Activated T-helper 1 cell treated with anti-CD3 and anti-CD28 coated beads, Interleukin-12 subunit alpha, Interleukin-12 subunit beta, Interleukin-2, Interleukin-4 antibody, amounts not matched to agents 30 ng/mL and 10 ng/mL and 1 ng/mL, durations not matched to agents 14 hours and 24 hours and 36 hours (primary cell): ENCODE measurements at regions of chr1 and their contacts with region 1.

Region 1: DNA sequence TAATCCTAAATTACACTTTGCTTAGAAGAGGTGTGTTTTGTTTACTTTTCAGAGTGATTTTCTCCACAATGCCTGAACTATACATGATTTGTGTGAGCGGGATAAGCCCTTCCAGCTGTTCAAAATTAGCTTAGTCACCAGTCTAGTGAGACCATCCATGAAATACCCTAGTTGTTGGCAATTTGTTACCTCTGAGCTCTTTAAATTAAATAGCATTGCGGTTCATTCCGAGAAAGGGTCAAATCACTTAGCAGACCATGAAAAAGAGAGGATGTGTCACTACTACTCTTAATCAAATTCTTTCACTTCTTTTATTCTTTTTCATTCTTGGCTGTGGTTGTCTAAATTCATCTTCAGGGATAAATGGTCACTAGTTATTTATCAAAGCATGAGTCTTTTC is 11.9 kb upstream of the VAV3 start:
- DNase-seq: no peak
- H3K4me3 Mint-ChIP-seq: no peak overlapping the region
- H3K27ac Mint-ChIP-seq: no peak overlapping the region
- H3K4me1 Mint-ChIP-seq: no peaks in the 10 kb centered on the region
- H3K27me3 Mint-ChIP-seq: peaks cover 9% of the 10 kb centered on the region

Region 2: DNA sequence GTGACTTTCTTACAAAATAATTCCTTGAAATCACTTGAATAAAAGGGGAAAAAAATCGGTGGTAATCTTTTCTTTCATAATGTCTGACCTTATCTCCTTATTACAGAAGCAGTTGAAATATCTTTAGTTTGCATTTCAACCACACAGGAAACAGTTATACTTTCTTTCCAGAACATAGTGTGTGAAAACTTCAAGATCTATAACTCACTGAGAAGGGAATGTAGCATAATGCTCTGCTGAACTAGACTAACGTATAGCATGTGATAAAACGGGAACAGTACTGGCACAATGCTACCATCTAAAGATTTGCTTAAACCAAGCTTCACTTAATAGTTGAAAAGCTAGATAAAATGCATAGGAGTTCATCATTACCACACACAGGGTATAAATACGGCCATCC is 56.9 kb before region 1 on chr1:
- intact Hi-C with region 1: no loop called
- DNase-seq: no peak
- H3K4me3 Mint-ChIP-seq: no peak overlapping the region
- H3K27ac Mint-ChIP-seq: no peak overlapping the region
- H3K4me1 Mint-ChIP-seq: peaks cover 16% of the 10 kb centered on the region
- H3K27me3 Mint-ChIP-seq: no peaks in the 10 kb centered on the region

Region 3: GRCh38 chr1:108053270-108054013 is 76.6 kb after region 1 on chr1:
- intact Hi-C with region 1: loop called (anchors 5 kb)
- DNase-seq: no peak
- H3K4me3 Mint-ChIP-seq: no peak overlapping the region
- H3K27ac Mint-ChIP-seq: no peak overlapping the region
- H3K4me1 Mint-ChIP-seq: peaks cover 6% of the 10 kb centered on the region
- H3K27me3 Mint-ChIP-seq: no peaks in the 10 kb centered on the region

Region 4: GRCh38 chr1:108357802-108358201 is 381.0 kb after region 1 on chr1:
- intact Hi-C with region 1: no loop called
- DNase-seq: no peak
- H3K4me3 Mint-ChIP-seq: no peak overlapping the region
- H3K27ac Mint-ChIP-seq: no peak overlapping the region
- H3K4me1 Mint-ChIP-seq: no peaks in the 10 kb centered on the region
- H3K27me3 Mint-ChIP-seq: no peaks in the 10 kb centered on the region